H1 (cell line): ENCODE measurements at regions of chr17 and their contacts with region 1.

Region 1: GRCh38 chr17:18004884-18005305 is 32.2 kb downstream of the DRC3 start:
- DNase-seq: peak in 1 of 2 experiments; percentile 57
- H3K4me3 ChIP-seq: no peak overlapping the region
- H3K27ac ChIP-seq: no peak overlapping the region
- H3K4me1 ChIP-seq: peaks cover 0 to 7% (median 0%) of the 10 kb centered on the region in 4 experiments; a peak in 1 of 7 replicates
- H3K27me3 ChIP-seq: no peaks in the 10 kb centered on the region
- CTCF ChIP-seq: peak; percentile 37 to 90 (median 70)
- EP300 ChIP-seq: no peak
- POLR2A ChIP-seq: no peak
- RAD21 ChIP-seq: peak; percentile 22 to 36; a peak in 3 of 4 replicates

Region 2: GRCh38 chr17:17985555-17985954 is 19.3 kb before region 1 on chr17:
- CTCF ChIA-PET with region 1: interaction called, 19 read pairs
- POLR2A ChIA-PET with region 1: interaction called, 3 read pairs
- DNase-seq: no peak
- H3K4me3 ChIP-seq: no peak overlapping the region
- H3K27ac ChIP-seq: no peak overlapping the region
- H3K4me1 ChIP-seq: no peaks in the 10 kb centered on the region; a peak in 1 of 7 replicates
- H3K27me3 ChIP-seq: no peaks in the 10 kb centered on the region; a peak in 1 of 7 replicates
- CTCF ChIP-seq: peak; percentile 39 to 53 (median 51)
- EP300 ChIP-seq: no peak
- POLR2A ChIP-seq: no peak
- RAD21 ChIP-seq: peak; percentile 44 to 60

Region 3: DNA sequence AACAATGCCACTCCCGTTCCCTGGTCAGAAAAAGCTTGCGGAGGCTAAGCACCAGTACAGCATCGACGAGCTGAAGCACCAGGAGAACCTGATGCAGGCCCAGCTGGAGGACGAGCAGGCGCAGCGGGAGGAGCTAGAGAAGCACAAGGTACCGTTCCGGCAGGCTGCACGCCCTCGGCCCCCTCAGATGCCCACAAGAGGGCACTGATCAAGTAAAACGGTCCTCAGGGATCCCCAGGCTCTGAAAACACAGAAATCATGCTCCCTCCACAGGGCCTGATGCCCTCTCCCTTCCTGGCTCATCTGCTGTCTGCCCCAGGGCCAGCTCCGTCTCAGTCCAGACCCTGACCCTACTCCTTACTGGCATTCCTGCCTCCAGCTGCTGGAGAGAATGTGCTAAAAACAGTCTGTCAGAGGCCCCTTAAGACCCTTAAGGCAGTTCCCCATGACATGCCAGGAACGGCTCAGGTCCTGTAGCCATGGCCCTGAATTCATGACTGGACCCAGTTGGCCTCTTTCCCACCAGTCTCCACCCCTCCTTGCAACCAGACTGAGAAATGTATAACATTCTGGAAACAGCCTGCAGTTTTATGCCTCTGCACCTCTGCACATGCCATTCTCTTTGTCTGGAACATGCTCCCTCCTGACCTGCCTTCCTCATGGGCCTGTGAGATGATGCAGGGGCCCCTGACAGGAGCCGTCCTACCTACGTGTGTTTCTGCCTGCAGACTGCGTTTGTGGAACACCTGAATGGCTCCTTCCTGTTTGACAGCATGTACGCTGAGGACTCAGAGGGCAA is 10.4 kb before region 1 on chr17:
- CTCF ChIA-PET with region 1: interaction called, 49 read pairs
- POLR2A ChIA-PET with region 1: interaction called, 3 read pairs
- DNase-seq: peak; percentile 53 to 77
- H3K4me3 ChIP-seq: no peak overlapping the region
- H3K27ac ChIP-seq: no peak overlapping the region
- H3K4me1 ChIP-seq: peaks cover 0 to 5% (median 0%) of the 10 kb centered on the region in 4 experiments; a peak in 4 of 7 replicates
- H3K27me3 ChIP-seq: no peaks in the 10 kb centered on the region; a peak in 1 of 7 replicates
- CTCF ChIP-seq: peak; percentile 77 to 86 (median 80)
- EP300 ChIP-seq: no peak
- POLR2A ChIP-seq: no peak
- RAD21 ChIP-seq: peak; percentile 54 to 71

Region 4: GRCh38 chr17:18017958-18018357 is 13.1 kb after region 1 on chr17:
- CTCF ChIA-PET with region 1: interaction called, 19 read pairs
- POLR2A ChIA-PET with region 1: interaction called, 16 read pairs
- DNase-seq: no peak
- H3K4me3 ChIP-seq: no peak overlapping the region
- H3K27ac ChIP-seq: no peak overlapping the region
- H3K4me1 ChIP-seq: no peaks in the 10 kb centered on the region
- H3K27me3 ChIP-seq: no peaks in the 10 kb centered on the region
- CTCF ChIP-seq: no peak
- EP300 ChIP-seq: no peak
- POLR2A ChIP-seq: no peak
- RAD21 ChIP-seq: no peak

Region 5: GRCh38 chr17:18025945-18026776 is 21.3 kb after region 1 on chr17:
- CTCF ChIA-PET with region 1: interaction called, 19 read pairs
- POLR2A ChIA-PET with region 1: interaction called, 3 read pairs
- DNase-seq: no peak
- H3K4me3 ChIP-seq: no peak overlapping the region
- H3K27ac ChIP-seq: no peak overlapping the region
- H3K4me1 ChIP-seq: no peaks in the 10 kb centered on the region
- H3K27me3 ChIP-seq: no peaks in the 10 kb centered on the region; a peak in 1 of 7 replicates
- CTCF ChIP-seq: no peak
- EP300 ChIP-seq: no peak
- POLR2A ChIP-seq: no peak
- RAD21 ChIP-seq: no peak

Region 6: GRCh38 chr17:18033442-18034099 is 28.7 kb after region 1 on chr17:
- CTCF ChIA-PET with region 1: interaction called, 16 read pairs
- POLR2A ChIA-PET with region 1: interaction called, 3 read pairs
- DNase-seq: peak in 1 of 2 experiments; percentile 13
- H3K4me3 ChIP-seq: no peak overlapping the region
- H3K27ac ChIP-seq: no peak overlapping the region
- H3K4me1 ChIP-seq: peaks cover 0 to 3% (median 0%) of the 10 kb centered on the region in 4 experiments; a peak in 2 of 7 replicates
- H3K27me3 ChIP-seq: no peaks in the 10 kb centered on the region
- CTCF ChIP-seq: peak in 2 of 3 experiments; percentile 60 to 69; a peak in 3 of 4 replicates
- EP300 ChIP-seq: no peak
- POLR2A ChIP-seq: no peak
- RAD21 ChIP-seq: peak; percentile 88

Region 7: DNA sequence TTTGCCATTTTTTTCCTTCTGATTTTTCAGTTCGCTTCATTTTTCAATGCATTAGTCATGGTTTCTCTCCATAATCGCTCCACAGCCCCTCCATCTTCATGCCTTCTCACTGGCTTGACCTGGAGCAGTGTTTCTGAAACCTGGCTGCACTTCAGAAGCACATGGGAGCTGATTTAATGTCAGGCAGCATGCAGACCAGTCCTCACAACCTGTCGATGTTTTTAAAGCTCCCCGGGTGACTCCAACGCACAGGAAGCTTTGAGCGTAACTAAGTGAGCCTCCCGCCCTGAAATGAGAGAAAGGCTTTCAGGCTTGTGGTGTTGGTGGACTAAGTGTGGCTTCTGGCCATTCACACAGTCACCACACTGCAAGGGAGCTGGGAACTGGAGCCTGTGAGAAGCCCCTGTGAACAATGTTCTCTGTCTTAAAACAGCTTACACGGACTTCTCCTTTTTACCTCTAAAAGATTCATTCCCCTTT is 66.0 kb after region 1 on chr17:
- CTCF ChIA-PET with region 1: no interaction called
- POLR2A ChIA-PET with region 1: no interaction called
- DNase-seq: no peak
- H3K4me3 ChIP-seq: no peak overlapping the region
- H3K27ac ChIP-seq: no peak overlapping the region
- H3K4me1 ChIP-seq: peaks cover 0 to 4% (median 0%) of the 10 kb centered on the region in 4 experiments; a peak in 1 of 7 replicates
- H3K27me3 ChIP-seq: no peaks in the 10 kb centered on the region
- CTCF ChIP-seq: no peak
- EP300 ChIP-seq: no peak
- POLR2A ChIP-seq: no peak
- RAD21 ChIP-seq: no peak

Region 8: DNA sequence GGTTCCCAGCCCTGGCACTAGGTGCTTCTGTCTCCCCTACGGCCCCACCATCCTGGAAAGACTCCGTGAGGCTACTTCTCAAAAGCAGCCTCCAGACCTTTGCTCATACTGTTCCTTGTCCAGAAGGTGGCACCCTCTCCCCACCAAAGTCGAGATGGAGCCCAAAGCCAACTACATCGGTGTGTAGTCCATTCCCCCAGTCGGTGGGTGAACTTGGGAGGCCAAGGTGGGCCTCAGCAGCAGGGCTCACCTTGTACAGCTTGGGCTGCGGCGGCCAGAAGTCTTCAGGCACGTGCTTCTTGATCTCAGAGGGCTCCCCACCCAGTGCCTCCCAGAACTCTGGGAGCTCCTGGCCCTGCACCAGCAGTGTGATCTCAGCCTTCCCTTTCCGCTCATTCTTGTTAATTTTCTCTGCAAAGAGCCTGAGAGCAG is 243.4 kb after region 1 on chr17:
- CTCF ChIA-PET with region 1: no interaction called
- POLR2A ChIA-PET with region 1: no interaction called
- DNase-seq: peak in 1 of 2 experiments; percentile 76
- H3K4me3 ChIP-seq: no peak overlapping the region
- H3K27ac ChIP-seq: no peak overlapping the region
- H3K4me1 ChIP-seq: peaks cover 0 to 16% (median 9%) of the 10 kb centered on the region in 4 experiments; a peak in 6 of 7 replicates
- H3K27me3 ChIP-seq: no peaks in the 10 kb centered on the region
- CTCF ChIP-seq: peak; percentile 73 to 84 (median 73)
- EP300 ChIP-seq: no peak
- POLR2A ChIP-seq: no peak
- RAD21 ChIP-seq: peak; percentile 85 to 90